OCI-LY7 (cell line): ENCODE measurements at regions of chr5 and their contacts with region 1.

Region 1: DNA sequence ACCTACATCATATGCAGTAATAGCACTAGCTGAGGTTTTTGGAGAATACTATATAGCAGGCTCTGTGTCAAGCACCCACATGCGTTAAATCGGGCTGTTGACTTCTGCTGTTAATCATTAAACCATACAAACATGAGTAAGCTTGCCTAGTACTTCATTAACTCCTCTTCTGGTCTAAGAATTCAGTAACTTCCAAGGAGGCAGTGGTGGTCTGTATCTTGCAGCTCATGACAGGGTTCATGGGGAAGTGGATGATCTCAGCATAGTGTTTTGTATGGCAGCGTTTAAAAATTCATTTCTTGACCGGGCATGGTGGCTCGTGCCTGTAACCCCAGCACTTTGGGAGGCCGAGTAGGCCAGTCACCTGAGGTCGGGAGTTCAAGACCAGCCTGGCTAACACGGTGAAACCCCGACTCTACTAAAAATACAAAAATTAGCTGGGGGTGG is at the start of gene HAVCR1:
- DNase-seq: no peak
- H3K4me3 ChIP-seq: no peak within 1 kb of the TSS
- H3K27ac ChIP-seq: no peak within 1 kb of the TSS
- H3K4me1 ChIP-seq: no peaks in the 10 kb centered on the region
- CTCF ChIP-seq: no peak
- total RNA-seq, gene HAVCR1: 0.13 TPM in 1 of 2 replicates, not detected in the other

Region 2: GRCh38 chr5:156367597-156367996 is 691.5 kb before region 1 on chr5:
- CTCF ChIA-PET with region 1: no interaction called
- POLR2A ChIA-PET with region 1: no interaction called
- intact Hi-C with region 1: no loop called
- DNase-seq: no peak
- H3K4me3 ChIP-seq: no peak overlapping the region
- H3K27ac ChIP-seq: no peak overlapping the region
- H3K4me1 ChIP-seq: no peaks in the 10 kb centered on the region
- CTCF ChIP-seq: no peak

Region 3: DNA sequence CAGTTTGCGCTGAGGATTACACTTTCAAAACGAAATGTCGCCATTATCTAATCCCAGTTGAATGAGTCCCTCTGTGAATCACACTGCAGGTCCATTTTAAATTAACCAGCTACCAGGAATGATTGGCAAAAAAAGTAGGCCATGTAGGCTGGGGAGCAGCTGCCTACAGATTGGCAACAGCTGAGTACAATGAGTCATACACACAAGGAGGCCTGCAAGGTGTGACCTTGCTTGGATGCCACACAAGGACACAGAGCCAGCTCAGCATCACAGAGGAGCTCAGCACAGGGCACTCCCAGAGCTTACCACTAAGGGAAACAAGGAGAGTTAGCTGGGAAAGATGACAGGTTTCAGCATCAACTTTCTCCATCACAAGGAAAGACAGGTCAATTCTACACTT is 13.1 kb before region 1 on chr5:
- CTCF ChIA-PET with region 1: no interaction called
- POLR2A ChIA-PET with region 1: interaction called, 11 read pairs
- intact Hi-C with region 1: no loop called
- DNase-seq: no peak
- H3K4me3 ChIP-seq: no peak overlapping the region
- H3K27ac ChIP-seq: no peak overlapping the region
- H3K4me1 ChIP-seq: no peaks in the 10 kb centered on the region
- CTCF ChIP-seq: no peak

Region 4: DNA sequence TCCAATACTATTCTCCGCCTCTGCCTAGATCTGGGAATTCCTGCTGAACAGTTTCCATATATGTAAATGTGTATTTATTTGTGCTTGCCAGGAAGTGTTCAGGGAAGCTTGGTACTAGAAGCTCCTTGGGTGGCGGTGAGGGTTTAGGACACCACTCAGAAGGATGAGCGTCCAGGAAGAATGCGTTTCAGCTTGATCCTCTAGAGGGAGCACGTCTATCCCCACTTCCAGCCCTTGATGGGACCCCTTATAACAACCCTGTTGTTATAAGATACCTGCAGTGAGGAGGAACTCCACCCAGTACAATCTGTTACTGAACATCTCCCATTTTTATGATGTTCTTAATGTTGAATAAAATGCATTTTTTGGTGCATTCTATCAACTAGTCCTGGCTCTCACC is 295.7 kb after region 1 on chr5:
- CTCF ChIA-PET with region 1: no interaction called
- POLR2A ChIA-PET with region 1: no interaction called
- intact Hi-C with region 1: no loop called
- DNase-seq: peak; percentile 31
- H3K4me3 ChIP-seq: no peak overlapping the region
- H3K27ac ChIP-seq: no peak overlapping the region
- H3K4me1 ChIP-seq: no peaks in the 10 kb centered on the region
- CTCF ChIP-seq: peak; percentile 73

Region 5: GRCh38 chr5:158802941-158803341 is 1743.8 kb after region 1 on chr5:
- CTCF ChIA-PET with region 1: no interaction called
- POLR2A ChIA-PET with region 1: no interaction called
- intact Hi-C with region 1: no loop called
- DNase-seq: no peak
- H3K4me3 ChIP-seq: no peak overlapping the region
- H3K27ac ChIP-seq: no peak overlapping the region
- H3K4me1 ChIP-seq: peaks cover 17% of the 10 kb centered on the region
- CTCF ChIP-seq: no peak